MCF 10A (cell line): ENCODE measurements at regions of chr20 and their contacts with region 1.

Region 1: DNA sequence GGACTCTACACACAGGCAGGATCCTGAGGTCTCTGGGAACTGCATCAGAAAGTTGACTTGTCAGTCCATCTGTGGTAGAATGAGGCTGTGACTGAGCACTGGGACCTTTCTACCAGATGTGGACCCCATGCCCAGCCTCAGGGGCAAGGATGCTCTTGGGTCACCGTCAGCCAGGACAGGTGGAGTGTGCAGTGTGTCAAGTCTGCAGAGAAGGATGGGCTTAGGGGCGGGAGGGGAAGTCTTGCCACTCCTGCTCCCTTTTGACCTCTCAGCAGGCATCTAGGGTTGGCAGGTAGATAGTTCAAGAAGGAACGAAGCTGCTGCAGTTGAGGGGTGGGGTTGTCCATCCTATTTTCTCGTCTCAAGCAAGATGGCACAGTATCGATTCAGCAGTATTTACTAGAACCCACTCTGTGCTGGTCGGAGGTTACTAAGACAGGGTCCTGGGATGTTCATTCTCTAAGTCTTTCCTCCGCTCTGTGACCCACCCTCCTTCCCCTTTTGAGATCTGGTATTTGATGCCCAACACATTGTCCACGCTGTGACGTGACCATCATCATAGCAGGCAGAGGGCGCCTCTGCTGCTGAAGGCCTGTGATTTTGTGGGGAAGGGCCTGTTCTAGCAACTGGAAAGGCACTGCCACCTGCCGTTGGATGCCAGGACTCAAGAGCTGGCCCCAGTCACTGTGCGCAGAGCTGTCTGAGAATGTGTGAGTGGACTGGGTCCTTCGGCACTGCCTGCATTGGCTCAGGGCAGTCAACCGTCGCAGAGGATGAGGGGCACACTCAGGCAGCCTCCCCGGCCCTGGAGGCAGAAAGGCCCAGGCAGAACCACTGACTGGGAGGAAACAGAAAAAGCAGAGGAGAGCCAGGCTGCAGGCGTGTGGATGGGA is 23.2 kb downstream of the RBCK1 start:
- DNase-seq: peak; percentile 77
- H3K4me3 Mint-ChIP-seq: no peak overlapping the region
- H3K27ac Mint-ChIP-seq: no peak overlapping the region
- H3K4me1 Mint-ChIP-seq: peaks cover 7% of the 10 kb centered on the region
- H3K27me3 Mint-ChIP-seq: no peaks in the 10 kb centered on the region
- CTCF ChIP-seq: peak; percentile 67

Region 2: DNA sequence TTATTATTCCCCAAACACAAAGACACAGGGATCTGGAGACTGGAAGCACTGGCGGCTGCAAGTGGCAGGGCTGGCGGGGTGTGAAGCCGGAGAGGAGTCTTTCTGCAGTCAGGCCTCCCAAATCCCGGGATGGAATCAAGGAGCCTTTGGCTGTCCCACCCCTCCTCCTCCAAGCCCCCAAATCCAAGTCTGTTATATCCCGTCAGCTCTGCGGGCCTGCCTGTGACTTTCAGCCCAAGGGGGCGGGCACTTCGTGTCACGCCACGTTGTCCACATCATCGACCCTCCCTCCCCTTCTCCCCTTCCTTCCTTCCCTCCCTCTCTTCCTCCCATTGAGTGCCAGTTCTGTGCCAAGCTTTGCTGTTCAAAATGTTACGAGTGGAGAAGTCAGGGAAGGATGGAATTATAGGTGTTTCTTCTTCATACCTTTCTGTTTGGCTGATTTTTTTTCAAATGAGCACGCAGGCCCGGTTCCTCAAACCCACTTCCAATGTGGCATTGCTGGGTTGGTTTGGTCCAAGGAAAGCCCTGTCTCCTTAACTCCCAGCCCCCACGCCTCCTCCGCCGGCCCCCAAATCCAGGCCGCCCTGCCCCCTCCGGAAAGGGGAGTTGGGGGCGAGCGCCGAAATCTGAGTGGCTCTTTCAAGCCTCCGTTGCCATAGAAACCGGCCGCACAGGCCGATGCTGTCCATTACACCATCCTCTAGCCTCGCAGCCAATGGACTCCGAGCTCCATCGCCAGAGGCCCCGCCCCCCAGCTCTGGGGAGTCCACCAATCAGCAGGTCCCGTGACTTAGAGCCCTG is 121.2 kb before region 1 on chr20:
- CTCF ChIA-PET with region 1: no interaction called
- POLR2A ChIA-PET with region 1: no interaction called
- intact Hi-C with region 1: no loop called
- DNase-seq: no peak
- H3K4me3 Mint-ChIP-seq: no peak overlapping the region
- H3K27ac Mint-ChIP-seq: no peak overlapping the region
- H3K4me1 Mint-ChIP-seq: peaks cover 18% of the 10 kb centered on the region
- H3K27me3 Mint-ChIP-seq: no peaks in the 10 kb centered on the region
- CTCF ChIP-seq: no peak

Region 3: DNA sequence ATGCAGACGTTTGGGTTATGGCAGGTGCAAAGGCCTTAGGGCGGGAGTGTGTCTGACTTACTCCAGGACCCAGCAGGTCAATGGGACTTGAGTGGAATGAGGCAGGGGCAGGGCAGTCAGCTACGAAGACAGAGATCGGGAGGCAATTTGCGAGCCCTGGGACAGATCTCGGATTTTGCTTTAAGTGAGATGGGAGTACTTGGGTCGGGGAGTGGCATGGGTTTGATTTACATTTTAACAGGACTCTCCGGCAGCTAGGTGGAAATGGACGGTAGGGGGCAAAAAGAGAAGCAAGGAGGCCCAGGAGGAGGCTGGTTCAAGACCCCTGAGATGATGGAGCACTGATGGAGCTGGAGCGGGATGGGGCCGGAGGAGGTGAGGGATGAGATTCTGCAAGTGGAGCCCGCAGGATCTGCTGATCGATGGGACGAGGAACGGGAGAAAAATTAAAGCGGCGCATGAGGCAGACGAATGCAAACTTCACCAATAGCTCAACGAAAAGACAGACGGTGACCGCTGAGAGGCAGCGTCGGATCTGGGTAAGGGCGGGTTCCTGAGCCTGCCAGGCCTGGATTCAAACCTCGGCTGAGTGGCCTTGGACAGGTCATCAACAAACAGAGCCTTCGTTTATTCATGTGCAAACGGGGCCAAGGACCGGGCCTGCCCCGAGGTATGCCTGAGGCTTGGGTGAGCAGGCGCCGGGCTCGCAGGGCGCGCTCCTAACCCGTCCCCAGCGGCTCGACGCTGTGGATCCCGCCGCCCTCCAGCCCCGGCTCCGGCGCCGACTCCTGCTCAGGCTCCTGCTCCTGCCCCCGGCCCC is 23.9 kb before region 1 on chr20:
- CTCF ChIA-PET with region 1: interaction called, 5 read pairs
- POLR2A ChIA-PET with region 1: interaction called, 6 read pairs
- intact Hi-C with region 1: loop called (anchors 1 kb)
- DNase-seq: peak; percentile 76
- H3K4me3 Mint-ChIP-seq: peak overlapping the region; percentile 82
- H3K27ac Mint-ChIP-seq: peak overlapping the region; percentile 30
- H3K4me1 Mint-ChIP-seq: peaks cover 31% of the 10 kb centered on the region
- H3K27me3 Mint-ChIP-seq: no peaks in the 10 kb centered on the region
- CTCF ChIP-seq: peak; percentile 19

Region 4: GRCh38 chr20:414161-414560 is 17.1 kb before region 1 on chr20:
- CTCF ChIA-PET with region 1: interaction called, 16 read pairs
- POLR2A ChIA-PET with region 1: interaction called, 4 read pairs
- intact Hi-C with region 1: no loop called
- DNase-seq: no peak
- H3K4me3 Mint-ChIP-seq: no peak overlapping the region
- H3K27ac Mint-ChIP-seq: peak overlapping the region; percentile 66
- H3K4me1 Mint-ChIP-seq: peaks cover 45% of the 10 kb centered on the region
- H3K27me3 Mint-ChIP-seq: no peaks in the 10 kb centered on the region
- CTCF ChIP-seq: no peak

Region 5: GRCh38 chr20:444862-445426 is 13.7 kb after region 1 on chr20:
- CTCF ChIA-PET with region 1: interaction called, 15 read pairs
- POLR2A ChIA-PET with region 1: interaction called, 10 read pairs
- intact Hi-C with region 1: no loop called
- DNase-seq: peak; percentile 86
- H3K4me3 Mint-ChIP-seq: no peak overlapping the region
- H3K27ac Mint-ChIP-seq: peak overlapping the region; percentile 47
- H3K4me1 Mint-ChIP-seq: peaks cover 11% of the 10 kb centered on the region
- H3K27me3 Mint-ChIP-seq: no peaks in the 10 kb centered on the region
- CTCF ChIP-seq: no peak